Activated CD8-positive, alpha-beta memory T cell treated with anti-CD3 and anti-CD28 coated beads, Interleukin-2, amount 10 ng/mL, durations not matched to agents 7 days and 5 days (primary cell): ENCODE measurements at regions of chr1 and their contacts with region 1.

Region 1: DNA sequence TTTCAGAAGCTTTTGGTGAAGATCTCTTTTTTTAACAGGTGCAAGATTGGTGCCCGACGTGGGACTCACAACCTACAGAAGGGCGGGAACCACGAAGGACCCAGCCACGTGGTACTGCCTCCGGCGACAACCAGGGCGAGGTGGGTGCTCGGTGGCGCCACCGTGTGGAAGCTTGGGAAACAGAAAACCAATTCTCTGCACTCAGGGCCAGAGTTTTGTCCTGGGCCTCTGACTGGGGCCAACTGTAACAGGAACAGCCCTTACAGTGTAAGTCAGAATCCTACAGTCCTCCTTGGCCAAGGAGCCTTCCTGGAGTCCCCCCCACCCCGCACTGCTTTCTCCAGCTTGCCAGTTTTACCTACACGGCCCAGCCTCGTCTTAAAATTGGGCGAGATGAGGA is 11.6 kb upstream of the S100A7A start:
- DNase-seq: peak; percentile 62
- ATAC-seq: no peak
- H3K4me3 Mint-ChIP-seq: no peak overlapping the region
- H3K27ac Mint-ChIP-seq: no peak overlapping the region
- H3K4me1 Mint-ChIP-seq: peaks cover 2% of the 10 kb centered on the region
- H3K27me3 Mint-ChIP-seq: peaks cover 27% of the 10 kb centered on the region

Region 2: DNA sequence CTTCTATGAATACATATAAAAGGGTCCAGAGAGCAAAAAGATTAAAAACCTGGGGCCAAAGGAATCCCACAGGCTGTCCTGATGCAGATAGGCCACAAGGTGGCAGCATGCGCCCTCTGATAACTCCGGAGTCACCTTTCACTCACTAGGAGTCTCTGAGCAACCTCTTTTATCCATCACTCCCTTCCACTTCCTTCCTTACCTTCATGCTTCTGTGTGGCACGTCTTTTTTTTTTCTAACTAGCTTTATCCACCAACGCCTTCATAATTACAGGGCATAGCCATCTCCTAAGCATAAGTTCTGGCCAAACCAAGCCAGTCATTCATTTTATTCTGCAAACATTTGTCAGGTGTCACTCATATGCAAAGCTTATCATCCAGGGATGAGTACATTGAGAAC is 52.2 kb before region 1 on chr1:
- CTCF ChIA-PET with region 1: interaction called, 13 read pairs
- DNase-seq: peak; percentile 73
- ATAC-seq: peak; percentile 78
- H3K4me3 Mint-ChIP-seq: no peak overlapping the region
- H3K27ac Mint-ChIP-seq: no peak overlapping the region
- H3K4me1 Mint-ChIP-seq: peaks cover 4% of the 10 kb centered on the region
- H3K27me3 Mint-ChIP-seq: peaks cover 26% of the 10 kb centered on the region

Region 3: DNA sequence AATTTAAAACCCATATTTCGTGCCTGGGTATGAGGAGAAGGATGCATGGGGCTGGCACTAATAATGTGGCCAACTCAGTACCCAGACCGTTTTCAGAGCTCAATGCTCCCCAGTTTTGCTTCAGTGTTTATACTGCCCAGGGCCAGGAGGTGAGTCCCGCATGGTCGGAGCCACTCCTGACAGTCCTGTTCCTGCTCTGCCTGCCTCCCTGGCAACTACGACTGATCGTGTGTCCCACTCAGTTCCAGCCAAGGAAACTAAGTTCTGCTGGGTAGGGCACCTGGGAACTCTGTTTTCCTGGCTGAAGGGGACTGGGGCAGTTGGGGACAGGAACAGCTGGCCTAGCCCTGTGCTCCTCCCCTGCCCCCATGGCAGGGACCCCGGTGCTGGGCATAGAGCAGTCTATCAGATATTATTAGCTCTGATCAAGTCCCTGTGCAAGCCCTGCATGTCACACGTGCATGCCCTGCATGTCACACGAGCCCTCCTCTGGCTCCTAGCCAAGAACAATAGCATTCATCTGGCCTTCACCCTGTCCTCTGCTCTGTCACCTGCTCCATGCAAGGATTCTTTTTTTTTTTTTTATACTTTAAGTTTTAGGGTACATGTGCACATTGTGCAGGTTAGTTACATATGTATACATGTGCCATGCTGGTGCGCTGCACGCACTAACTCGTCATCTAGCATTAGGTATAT is 36.6 kb after region 1 on chr1:
- CTCF ChIA-PET with region 1: no interaction called
- DNase-seq: no peak
- ATAC-seq: no peak
- H3K4me3 Mint-ChIP-seq: no peak overlapping the region
- H3K27ac Mint-ChIP-seq: no peak overlapping the region
- H3K4me1 Mint-ChIP-seq: no peaks in the 10 kb centered on the region
- H3K27me3 Mint-ChIP-seq: peaks cover 26% of the 10 kb centered on the region